ENCODE measurements at regions of chr16 and their contacts with region 1.

Region 1: DNA sequence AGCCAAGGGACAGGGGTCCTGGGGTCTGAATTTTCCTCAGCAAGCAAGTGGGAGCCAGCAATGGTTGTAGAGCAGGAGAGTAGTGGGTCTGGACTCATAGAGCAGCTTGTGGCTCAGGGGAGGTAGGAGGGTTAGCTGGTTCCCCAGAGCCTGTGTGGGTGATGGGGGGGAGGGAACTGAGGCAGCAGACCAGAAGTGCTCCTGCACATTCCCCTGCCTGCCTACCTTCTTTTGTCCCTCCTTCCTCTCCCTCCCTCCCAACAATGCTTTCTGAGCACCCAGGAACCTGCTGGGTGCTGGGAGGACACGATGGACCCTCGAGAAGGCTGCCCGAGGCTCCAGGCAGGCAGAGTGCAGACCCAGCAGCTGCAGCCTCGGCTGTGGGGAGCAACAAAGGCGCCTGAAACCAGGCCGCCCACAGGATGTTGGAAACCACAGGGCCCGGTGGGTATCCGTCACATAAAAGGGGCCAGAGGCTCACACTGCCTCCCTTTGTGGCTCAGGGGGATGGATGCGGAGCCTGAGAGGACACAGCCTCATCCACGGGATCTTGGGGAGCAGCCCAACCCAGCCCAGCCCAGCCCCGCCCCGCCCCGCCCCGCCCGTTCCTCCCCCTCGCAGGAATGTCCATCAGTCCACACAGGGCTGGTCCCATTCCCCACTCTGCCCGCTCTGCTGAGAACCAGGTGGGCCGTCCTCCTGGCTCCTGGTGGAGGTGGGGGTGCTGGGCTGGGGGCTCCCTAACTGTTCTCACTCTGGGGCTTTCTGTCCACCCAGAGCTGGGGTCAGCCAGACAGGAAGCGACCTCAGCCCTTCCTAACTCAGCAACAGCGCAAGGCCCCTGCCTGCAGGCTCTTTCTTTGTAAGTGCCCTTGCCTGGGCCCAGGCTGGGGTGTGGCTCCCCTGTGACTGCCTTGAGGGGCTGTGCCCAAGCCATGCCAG is 1.7 kb upstream of the NLRC3 start:
- DNase-seq: peak; percentile 86
- H3K4me3 Mint-ChIP-seq: peak overlapping the region; percentile 99
- H3K27ac Mint-ChIP-seq: peak overlapping the region; percentile 94
- H3K4me1 Mint-ChIP-seq: peaks cover 34% of the 10 kb centered on the region
- H3K27me3 Mint-ChIP-seq: no peaks in the 10 kb centered on the region

Region 2: DNA sequence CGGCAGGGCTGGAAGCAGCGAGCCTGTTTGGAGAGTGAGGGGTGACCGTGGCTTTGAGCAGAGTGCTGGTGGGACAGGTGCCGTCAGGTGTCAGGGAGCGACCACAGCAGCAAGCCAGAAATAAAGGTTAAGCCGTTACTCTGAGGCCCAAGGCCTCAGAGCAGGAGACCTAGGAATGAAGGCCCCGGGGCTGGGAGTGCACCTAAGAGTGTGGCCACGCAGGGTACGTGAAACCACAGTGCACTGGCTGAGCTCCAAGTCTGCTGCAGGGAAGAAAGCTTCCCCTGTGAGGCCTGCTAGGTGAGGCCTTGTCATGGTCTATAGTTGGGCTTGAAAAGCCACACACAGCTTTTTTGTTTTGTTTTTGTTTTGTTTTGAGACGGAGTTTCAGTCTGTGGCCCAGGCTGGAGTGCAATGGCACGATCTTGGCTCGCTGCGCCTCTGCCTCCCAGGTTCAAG is 69.4 kb before region 1 on chr16:
- CTCF ChIA-PET with region 1: no interaction called
- POLR2A ChIA-PET with region 1: no interaction called
- intact Hi-C with region 1: loop called (anchors 10 kb)
- DNase-seq: peak; percentile 91
- H3K4me3 Mint-ChIP-seq: no peak overlapping the region
- H3K27ac Mint-ChIP-seq: peak overlapping the region; percentile 86
- H3K4me1 Mint-ChIP-seq: peaks cover 58% of the 10 kb centered on the region
- H3K27me3 Mint-ChIP-seq: no peaks in the 10 kb centered on the region

Region 3: GRCh38 chr16:3530371-3530914 is 48.4 kb before region 1 on chr16:
- CTCF ChIA-PET with region 1: no interaction called
- POLR2A ChIA-PET with region 1: no interaction called
- intact Hi-C with region 1: loop called (anchors 5 kb)
- DNase-seq: no peak
- H3K4me3 Mint-ChIP-seq: no peak overlapping the region
- H3K27ac Mint-ChIP-seq: no peak overlapping the region
- H3K4me1 Mint-ChIP-seq: peaks cover 5% of the 10 kb centered on the region
- H3K27me3 Mint-ChIP-seq: no peaks in the 10 kb centered on the region

Region 4: GRCh38 chr16:3611146-3611975 is 32.5 kb after region 1 on chr16 and contains the start of gene SLX4:
- CTCF ChIA-PET with region 1: no interaction called
- POLR2A ChIA-PET with region 1: interaction called, 4 read pairs
- intact Hi-C with region 1: loop called (anchors 1 kb)
- DNase-seq: peak; percentile 94
- H3K4me3 Mint-ChIP-seq: peak within 1 kb of the TSS; percentile 95
- H3K27ac Mint-ChIP-seq: peak within 1 kb of the TSS; percentile 89
- H3K4me1 Mint-ChIP-seq: peaks cover 43% of the 10 kb centered on the region
- H3K27me3 Mint-ChIP-seq: no peaks in the 10 kb centered on the region
- total RNA-seq, gene SLX4: 13.4 to 15.3 TPM

Region 5: DNA sequence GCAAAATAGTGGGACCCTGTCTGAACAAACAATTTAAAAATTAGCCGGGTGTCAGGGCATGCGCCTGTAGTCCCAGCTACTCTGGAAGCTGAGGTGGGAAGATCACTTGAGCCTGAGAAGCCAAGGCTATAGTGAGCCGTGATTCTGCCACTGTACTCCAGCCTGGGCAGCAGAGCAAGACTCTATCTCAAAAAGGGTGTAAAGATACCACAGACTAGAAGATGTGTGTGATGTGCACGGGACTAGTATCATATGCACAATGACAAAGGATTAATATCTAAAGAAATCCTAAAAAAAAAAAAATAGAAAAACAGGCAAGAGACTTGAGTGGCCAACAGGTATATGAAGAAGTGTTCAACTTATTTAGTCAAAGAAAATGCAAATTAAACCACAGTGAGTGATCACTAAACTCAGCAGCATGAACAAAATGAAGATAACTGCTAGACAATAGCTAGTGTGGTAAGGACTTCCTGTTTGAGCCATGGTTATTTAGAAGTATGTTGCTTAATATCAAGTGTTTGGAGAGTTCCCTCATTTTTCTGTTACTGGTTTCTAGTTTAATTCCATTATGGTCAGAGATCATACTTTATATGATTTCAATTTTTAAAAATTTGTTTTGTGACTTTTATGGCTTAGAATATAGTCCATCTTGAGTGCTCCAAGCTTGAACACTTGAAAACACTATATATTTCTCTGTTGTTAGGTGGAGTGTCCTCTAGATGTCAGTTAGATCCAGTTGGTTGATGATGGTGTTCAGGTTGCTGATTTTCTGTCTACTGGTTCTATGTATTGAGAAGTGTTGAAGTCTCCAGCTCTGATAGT is 47.2 kb after region 1 on chr16:
- CTCF ChIA-PET with region 1: no interaction called
- POLR2A ChIA-PET with region 1: no interaction called
- intact Hi-C with region 1: loop called (anchors 5 kb)
- DNase-seq: no peak
- H3K4me3 Mint-ChIP-seq: no peak overlapping the region
- H3K27ac Mint-ChIP-seq: peak overlapping the region; percentile 83
- H3K4me1 Mint-ChIP-seq: peaks cover 25% of the 10 kb centered on the region
- H3K27me3 Mint-ChIP-seq: no peaks in the 10 kb centered on the region

Region 6: GRCh38 chr16:3873482-3874173 is 294.7 kb after region 1 on chr16:
- CTCF ChIA-PET with region 1: no interaction called
- POLR2A ChIA-PET with region 1: no interaction called
- intact Hi-C with region 1: no loop called
- DNase-seq: no peak
- H3K4me3 Mint-ChIP-seq: no peak overlapping the region
- H3K27ac Mint-ChIP-seq: no peak overlapping the region
- H3K4me1 Mint-ChIP-seq: peaks cover 96% of the 10 kb centered on the region
- H3K27me3 Mint-ChIP-seq: no peaks in the 10 kb centered on the region

Measured in activated CD4-positive, alpha-beta memory T cell treated with anti-CD3 and anti-CD28 coated beads for 36 hours (primary cell).